Transverse colon (tissue), 4 donors: ENCODE measurements at regions of chr9 and their contacts with region 1.

Region 1: DNA sequence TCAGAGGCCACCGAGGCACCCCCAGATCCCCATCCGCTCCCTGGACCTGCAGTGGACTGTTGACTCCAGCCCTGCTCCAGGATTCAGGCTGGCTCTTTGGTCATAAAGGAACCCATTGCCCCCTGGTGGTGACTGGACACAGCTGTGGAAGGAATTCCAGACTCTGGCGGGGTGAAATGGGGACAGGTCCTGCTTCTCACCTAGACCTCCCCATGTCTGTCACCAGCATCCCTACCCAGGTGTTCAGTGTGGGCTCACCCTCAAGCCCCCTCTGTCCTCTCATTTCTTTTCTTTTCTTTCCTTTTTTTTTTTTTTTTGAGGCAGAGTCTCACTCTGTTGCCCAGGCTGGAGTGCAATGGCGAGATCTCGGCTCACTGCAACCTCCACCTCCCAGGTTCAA is 25.5 kb upstream of the STXBP1 start:
- DNase-seq: peak; percentile 85
- H3K4me3 ChIP-seq: no peak overlapping the region
- H3K27ac ChIP-seq: no peak overlapping the region
- H3K4me1 ChIP-seq: peaks cover 0 to 29% (median 15%) of the 10 kb centered on the region in 4 donors
- H3K27me3 ChIP-seq: no peaks in the 10 kb centered on the region
- CTCF ChIP-seq: peak; percentile 83 to 97 (median 88)
- EP300 ChIP-seq: no peak
- POLR2A ChIP-seq: no peak

Region 2: GRCh38 chr9:127503947-127504782 is 82.4 kb before region 1 on chr9:
- in situ Hi-C with region 1: loop called in 3 of 4 experiments (anchors 5 to 10 kb)
- intact Hi-C with region 1: loop called (anchors 1 kb)
- DNase-seq: peak; percentile 87
- H3K4me3 ChIP-seq: no peak overlapping the region
- H3K27ac ChIP-seq: peak overlapping the region in 3 of 4 donors; percentile 1 to 32 (median 23)
- H3K4me1 ChIP-seq: peaks cover 0 to 2% (median 0%) of the 10 kb centered on the region in 4 donors
- H3K27me3 ChIP-seq: no peaks in the 10 kb centered on the region
- CTCF ChIP-seq: peak; percentile 76 to 92 (median 87)
- EP300 ChIP-seq: no peak
- POLR2A ChIP-seq: no peak

Region 3: GRCh38 chr9:127509962-127510313 is 76.6 kb before region 1 on chr9:
- in situ Hi-C with region 1: loop called in 2 of 4 experiments (anchors 5 to 10 kb)
- intact Hi-C with region 1: no loop called
- DNase-seq: no peak
- H3K4me3 ChIP-seq: no peak overlapping the region
- H3K27ac ChIP-seq: peak overlapping the region; percentile 21 to 62 (median 51)
- H3K4me1 ChIP-seq: peaks cover 0 to 8% (median 3%) of the 10 kb centered on the region in 4 donors
- H3K27me3 ChIP-seq: no peaks in the 10 kb centered on the region
- CTCF ChIP-seq: no peak
- EP300 ChIP-seq: no peak
- POLR2A ChIP-seq: no peak

Region 4: DNA sequence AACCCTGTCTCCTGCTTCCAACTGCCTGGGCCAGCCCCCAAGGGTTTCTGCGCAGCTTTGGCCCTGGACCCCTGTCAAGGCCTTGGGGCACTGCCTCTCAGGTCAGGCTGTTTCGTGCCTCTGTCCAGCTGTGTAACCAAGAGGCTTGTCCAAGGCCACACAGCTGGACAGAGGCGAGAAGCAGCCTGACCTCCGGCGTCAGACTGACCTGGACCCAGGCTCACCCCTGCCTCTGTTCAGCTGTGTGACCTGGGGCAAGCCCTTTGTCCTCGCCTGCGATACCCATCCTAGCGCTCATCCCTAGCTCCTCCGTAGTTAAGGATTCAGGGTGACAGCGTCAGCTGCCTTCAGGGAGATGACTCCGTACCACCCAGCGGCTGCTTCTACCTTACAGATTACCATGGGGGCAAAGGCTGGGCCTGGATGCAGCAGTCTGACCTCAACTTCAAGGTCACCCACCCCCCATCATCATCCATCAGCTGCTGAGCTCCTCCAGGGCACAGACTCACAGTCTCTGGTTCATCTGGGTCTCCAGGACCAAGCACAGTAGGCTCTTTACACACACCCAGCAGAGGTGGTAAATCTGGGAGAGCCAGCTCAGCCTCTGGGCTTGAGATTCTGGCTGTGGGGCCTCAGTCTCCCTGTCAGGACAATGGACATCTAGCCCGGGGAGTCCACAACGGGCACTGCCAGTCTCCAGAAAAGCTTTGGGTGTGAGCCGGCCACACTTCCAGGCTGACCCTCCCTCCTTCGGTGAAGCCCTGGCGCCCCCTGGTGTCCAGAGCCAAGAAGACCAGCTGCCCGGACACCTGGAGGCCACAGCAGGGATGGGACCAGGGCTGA is 283.0 kb after region 1 on chr9:
- in situ Hi-C with region 1: loop called in 1 of 4 experiments (anchors 10 kb)
- intact Hi-C with region 1: loop called (anchors 5 kb)
- DNase-seq: peak; percentile 92
- H3K4me3 ChIP-seq: no peak overlapping the region
- H3K27ac ChIP-seq: no peak overlapping the region
- H3K4me1 ChIP-seq: peaks cover 5 to 11% (median 9%) of the 10 kb centered on the region in 4 donors
- H3K27me3 ChIP-seq: no peaks in the 10 kb centered on the region
- CTCF ChIP-seq: peak; percentile 80 to 97 (median 88)
- EP300 ChIP-seq: no peak
- POLR2A ChIP-seq: no peak

Region 5: DNA sequence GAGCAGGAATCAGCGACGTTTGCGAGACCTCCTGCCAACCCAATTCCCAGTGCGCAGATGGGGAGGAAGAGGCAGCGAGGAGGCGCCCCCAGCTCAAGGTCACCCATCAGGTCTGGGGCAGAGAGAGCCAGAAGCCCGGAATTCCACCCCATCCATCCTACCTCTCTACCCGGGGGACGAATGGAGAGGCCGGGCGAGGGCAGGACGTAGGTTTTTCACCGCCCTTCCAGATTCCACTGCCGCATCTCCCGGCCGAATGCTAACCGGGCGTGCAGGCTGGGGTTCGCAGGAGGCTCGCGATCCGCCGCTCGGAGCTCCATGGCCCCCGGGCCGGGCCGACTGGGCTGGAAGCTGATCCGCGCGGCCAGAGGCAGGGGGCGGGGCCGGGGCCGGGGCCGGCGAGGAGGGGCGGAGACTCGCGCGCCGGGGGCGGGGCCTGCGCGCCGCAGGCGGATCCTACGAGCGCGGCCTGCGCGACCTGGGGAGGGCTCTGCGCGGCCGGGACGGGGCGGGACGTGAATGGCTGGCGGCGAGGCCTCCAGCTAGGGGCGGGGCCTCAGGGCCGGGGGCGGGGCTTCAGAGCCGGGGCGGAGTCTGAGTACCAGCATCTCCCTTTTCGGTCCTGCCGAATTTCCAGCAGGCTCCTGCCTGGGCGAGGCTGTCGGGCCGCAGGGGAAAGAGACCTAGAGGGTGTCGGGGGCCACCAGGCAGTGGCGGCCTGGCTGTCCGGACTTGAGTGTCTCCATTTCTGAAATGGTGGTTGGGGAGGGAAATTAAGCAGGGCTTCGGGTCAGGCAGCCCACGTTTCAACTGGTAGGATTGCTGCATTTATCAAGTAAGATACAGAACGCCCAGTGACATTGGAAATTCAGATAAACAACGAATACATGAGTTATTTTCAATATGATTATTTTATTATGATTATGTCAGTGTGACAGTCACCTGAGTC is 330.4 kb after region 1 on chr9 and contains the start of gene ST6GALNAC4:
- in situ Hi-C with region 1: loop called (anchors 10 to 25 kb)
- intact Hi-C with region 1: loop called (anchors 2 kb)
- DNase-seq: peak; percentile 96
- H3K4me3 ChIP-seq: peak within 1 kb of the TSS; percentile 42 to 54 (median 53)
- H3K27ac ChIP-seq: peak within 1 kb of the TSS; percentile 58 to 84 (median 71)
- H3K4me1 ChIP-seq: peaks cover 27 to 72% (median 62%) of the 10 kb centered on the region in 4 donors
- H3K27me3 ChIP-seq: peaks cover 3% of the 10 kb centered on the region
- CTCF ChIP-seq: no peak
- EP300 ChIP-seq: no peak
- POLR2A ChIP-seq: peak; percentile 28
- total RNA-seq, gene ST6GALNAC4: 16.7 to 66.1 (median 47.3) TPM